Right ventricle myocardium inferior (tissue), 1 donor: ENCODE measurements at regions of chr12 and their contacts with region 1.

Region 1: GRCh38 chr12:55738123-55739024 is 4.5 kb upstream of the GDF11 start:
- DNase-seq: peak; percentile 90
- ATAC-seq: peak; percentile 82

Region 2: GRCh38 chr12:55624056-55624455 is 114.3 kb before region 1 on chr12:
- intact Hi-C with region 1: no loop called
- DNase-seq: no peak
- ATAC-seq: no peak

Region 3: GRCh38 chr12:55659486-55660385 is 78.6 kb before region 1 on chr12:
- intact Hi-C with region 1: loop called (anchors 5 kb)
- DNase-seq: no peak
- ATAC-seq: peak; percentile 92

Region 4: GRCh38 chr12:55681142-55682077 is 57.0 kb before region 1 on chr12:
- intact Hi-C with region 1: loop called (anchors 5 kb)
- DNase-seq: peak; percentile 78
- ATAC-seq: peak; percentile 79

Region 5: DNA sequence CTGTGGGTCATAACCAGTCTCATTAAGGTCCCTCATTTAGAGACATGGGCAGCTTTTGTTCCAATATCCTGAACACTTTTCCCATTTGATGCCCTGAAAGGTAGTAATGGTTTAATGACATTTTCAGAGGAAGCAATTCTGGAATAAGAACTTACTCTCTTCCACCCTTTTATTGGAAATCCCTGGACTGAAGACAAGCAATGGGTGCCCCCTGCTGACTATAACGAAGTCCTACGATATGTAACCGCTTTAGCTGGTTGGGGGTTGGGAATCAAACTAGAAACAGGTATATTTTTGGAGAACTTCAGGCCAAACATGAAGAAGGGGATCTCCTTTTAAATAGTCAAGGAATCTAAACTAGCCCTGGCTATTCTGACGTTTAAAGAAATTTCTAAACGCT is 58.7 kb after region 1 on chr12:
- intact Hi-C with region 1: loop called (anchors 2 kb)
- DNase-seq: no peak
- ATAC-seq: peak; percentile 54

Region 6: GRCh38 chr12:55940065-55940732 is 201.8 kb after region 1 on chr12:
- intact Hi-C with region 1: loop called (anchors 1 kb)
- DNase-seq: peak; percentile 90
- ATAC-seq: peak; percentile 94

Region 7: GRCh38 chr12:56152318-56153033 is 414.1 kb after region 1 on chr12 and contains the start of gene MYL6B:
- intact Hi-C with region 1: no loop called
- DNase-seq: peak; percentile 98
- ATAC-seq: peak; percentile 96
- total RNA-seq, gene MYL6B: 45.8 TPM

Region 8: DNA sequence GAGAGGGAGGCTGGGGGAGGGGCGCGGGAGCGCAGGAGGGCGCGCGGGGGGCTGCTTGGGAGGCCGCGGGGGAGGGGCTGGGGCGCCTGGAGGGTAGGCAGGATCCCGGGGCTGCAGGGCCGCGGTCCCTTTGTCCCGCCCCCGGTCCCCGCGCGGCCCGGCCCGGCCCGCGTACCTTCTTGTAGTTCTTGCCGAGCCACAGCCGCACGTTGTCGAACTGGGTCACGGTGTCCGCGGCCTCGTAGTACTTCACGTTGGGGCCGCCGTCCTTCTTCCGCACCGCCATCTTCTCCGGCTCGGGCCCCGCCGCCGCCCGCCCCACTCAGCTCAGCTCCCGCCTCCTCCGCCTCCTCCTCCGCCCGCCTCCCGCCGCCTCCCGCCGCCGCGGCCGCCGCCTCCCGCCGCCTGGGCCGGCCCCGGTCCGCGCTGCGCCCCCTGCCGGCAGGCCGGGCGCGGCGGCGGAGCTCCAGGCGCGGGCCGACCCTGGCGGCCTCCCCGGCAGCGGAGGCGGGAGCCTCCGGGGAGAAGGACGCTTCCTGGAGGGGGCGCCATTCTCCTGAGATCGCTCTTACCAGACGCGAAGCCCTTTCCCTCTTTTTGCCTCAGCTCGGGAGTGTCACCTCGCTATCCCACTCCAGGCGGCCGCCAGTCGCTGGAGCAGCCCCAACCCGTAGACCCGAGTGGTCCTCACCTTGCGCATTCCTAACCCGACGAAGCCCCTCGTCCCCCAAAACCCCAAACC is 451.0 kb after region 1 on chr12 and contains the start of gene SMARCC2:
- intact Hi-C with region 1: loop called (anchors 2 kb)
- DNase-seq: peak; percentile 90
- ATAC-seq: peak; percentile 89
- total RNA-seq, gene SMARCC2: 68.8 TPM

Region 9: GRCh38 chr12:56234746-56235436 is 496.5 kb after region 1 on chr12:
- intact Hi-C with region 1: no loop called
- DNase-seq: peak; percentile 25
- ATAC-seq: no peak